ENCODE measurements at regions of chr4 and their contacts with region 1.

Region 1: GRCh38 chr4:29970626-29971025 is 749.5 kb upstream of the PCDH7 start:
- DNase-seq: no peak
- H3K4me3 ChIP-seq: no peak overlapping the region
- H3K27ac ChIP-seq: no peak overlapping the region
- H3K4me1 ChIP-seq: no peaks in the 10 kb centered on the region
- H3K27me3 ChIP-seq: no peaks in the 10 kb centered on the region
- CTCF ChIP-seq: no peak
- POLR2A ChIP-seq: no peak

Region 2: GRCh38 chr4:31461425-31461824 is 1490.8 kb after region 1 on chr4:
- intact Hi-C with region 1: loop called (anchors 5 kb)
- DNase-seq: no peak
- H3K4me3 ChIP-seq: no peak overlapping the region
- H3K27ac ChIP-seq: no peak overlapping the region
- H3K4me1 ChIP-seq: no peaks in the 10 kb centered on the region
- H3K27me3 ChIP-seq: no peaks in the 10 kb centered on the region
- CTCF ChIP-seq: no peak
- POLR2A ChIP-seq: no peak